Calu3 (cell line): ENCODE measurements at regions of chr17 and their contacts with region 1.

Region 1: GRCh38 chr17:34306466-34306865 is 12.8 kb upstream of the CCL8 start:
- DNase-seq: peak; percentile 15
- H3K4me3 Mint-ChIP-seq: no peak overlapping the region
- H3K27ac Mint-ChIP-seq: no peak overlapping the region
- H3K4me1 Mint-ChIP-seq: no peaks in the 10 kb centered on the region
- H3K27me3 Mint-ChIP-seq: peaks cover 78% of the 10 kb centered on the region
- CTCF ChIP-seq: no peak

Region 2: DNA sequence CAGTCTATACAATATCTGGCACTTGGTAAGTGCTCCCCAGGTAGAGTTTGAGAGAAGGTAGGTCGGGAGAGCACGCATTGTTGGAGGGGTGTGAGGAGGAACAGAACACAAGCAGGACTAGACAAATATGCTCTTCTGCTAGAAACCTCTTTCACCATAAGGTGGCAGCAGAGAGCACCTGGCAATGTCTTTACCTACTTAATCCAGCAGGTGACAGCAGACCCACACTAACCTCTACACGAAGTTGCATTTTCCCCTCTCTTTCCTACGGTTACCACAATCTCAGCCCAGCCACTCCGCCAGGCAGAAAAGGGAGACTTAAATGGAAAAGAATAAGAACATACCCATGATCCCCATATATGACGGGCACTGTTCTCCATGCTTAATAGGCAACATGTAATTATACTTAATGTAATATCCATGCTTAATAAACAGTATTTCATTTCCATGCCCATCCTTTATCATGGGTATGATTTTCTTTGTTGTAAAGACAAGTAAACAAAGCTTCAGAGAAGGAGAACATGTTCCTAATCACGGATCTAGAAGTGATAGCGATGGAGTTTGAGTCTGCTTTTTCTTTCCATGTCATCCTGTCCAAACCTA is 106.4 kb before region 1 on chr17:
- CTCF ChIA-PET with region 1: interaction called, 12 read pairs
- intact Hi-C with region 1: loop called (anchors 2 kb)
- DNase-seq: peak; percentile 71
- H3K4me3 Mint-ChIP-seq: no peak overlapping the region
- H3K27ac Mint-ChIP-seq: no peak overlapping the region
- H3K4me1 Mint-ChIP-seq: no peaks in the 10 kb centered on the region
- H3K27me3 Mint-ChIP-seq: peaks cover 66% of the 10 kb centered on the region
- CTCF ChIP-seq: peak; percentile 99

Region 3: DNA sequence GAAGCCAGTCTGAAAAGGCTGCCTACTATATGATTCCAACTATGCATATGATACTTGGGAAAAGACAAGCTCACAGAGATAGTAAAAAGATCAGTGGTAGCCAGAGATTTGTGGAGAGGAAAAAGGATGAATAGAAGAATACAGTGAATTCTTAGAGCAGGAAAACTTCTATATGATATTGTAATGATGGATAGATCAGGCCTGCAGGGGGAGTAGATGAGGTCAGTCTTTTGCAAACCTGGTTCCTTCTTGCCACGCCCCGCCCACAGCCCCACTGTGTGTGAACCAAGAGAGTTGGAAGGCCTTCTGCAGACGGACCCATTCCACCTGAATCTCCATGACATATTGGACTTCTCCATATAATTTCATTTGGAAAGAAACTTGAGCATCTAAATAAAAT is 12.0 kb after region 1 on chr17:
- CTCF ChIA-PET with region 1: no interaction called
- intact Hi-C with region 1: no loop called
- DNase-seq: peak; percentile 34
- H3K4me3 Mint-ChIP-seq: no peak overlapping the region
- H3K27ac Mint-ChIP-seq: no peak overlapping the region
- H3K4me1 Mint-ChIP-seq: no peaks in the 10 kb centered on the region
- H3K27me3 Mint-ChIP-seq: peaks cover 78% of the 10 kb centered on the region
- CTCF ChIP-seq: no peak

Region 4: DNA sequence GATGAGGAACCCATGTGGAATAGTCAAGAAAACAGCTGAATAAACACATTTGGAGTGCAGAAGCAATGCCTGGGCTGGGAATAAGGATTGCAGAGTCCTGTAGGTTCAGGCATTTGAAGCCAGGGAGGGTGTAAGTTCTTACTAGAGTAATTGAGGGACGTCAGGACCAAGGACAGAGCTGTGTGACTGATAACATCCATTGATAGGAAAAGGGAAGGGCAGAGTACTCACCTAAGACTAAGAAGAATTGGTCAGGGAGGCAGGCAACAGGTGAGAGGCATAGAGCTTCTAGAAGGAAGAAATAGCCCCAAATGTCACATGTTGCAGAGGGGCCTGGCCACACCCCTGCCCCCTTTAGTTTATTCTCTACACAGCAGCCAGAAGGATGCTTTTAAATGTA is 193.1 kb after region 1 on chr17:
- CTCF ChIA-PET with region 1: no interaction called
- intact Hi-C with region 1: no loop called
- DNase-seq: peak; percentile 17
- H3K4me3 Mint-ChIP-seq: no peak overlapping the region
- H3K27ac Mint-ChIP-seq: no peak overlapping the region
- H3K4me1 Mint-ChIP-seq: no peaks in the 10 kb centered on the region
- H3K27me3 Mint-ChIP-seq: peaks cover 33% of the 10 kb centered on the region
- CTCF ChIP-seq: no peak